ENCODE measurements at regions of chrX and their contacts with region 1.

Region 1: GRCh38 chrX:119791438-119792231 is at the start of gene RPL39:
- DNase-seq: peak in 1 of 2 experiments; percentile 71
- H3K4me3 ChIP-seq: peak within 1 kb of the TSS; percentile 72 to 98 (median 85)
- H3K27ac ChIP-seq: peak within 1 kb of the TSS; percentile 87
- H3K4me1 ChIP-seq: peaks cover 0 to 3% (median 0%) of the 10 kb centered on the region in 4 experiments; a peak in 1 of 7 replicates
- H3K27me3 ChIP-seq: no peaks in the 10 kb centered on the region
- CTCF ChIP-seq: no peak
- EP300 ChIP-seq: no peak
- POLR2A ChIP-seq: peak; percentile 90 to 94
- RAD21 ChIP-seq: no peak
- total RNA-seq, gene RPL39: 1,901 and 1,942 TPM in 2 replicates

Region 2: DNA sequence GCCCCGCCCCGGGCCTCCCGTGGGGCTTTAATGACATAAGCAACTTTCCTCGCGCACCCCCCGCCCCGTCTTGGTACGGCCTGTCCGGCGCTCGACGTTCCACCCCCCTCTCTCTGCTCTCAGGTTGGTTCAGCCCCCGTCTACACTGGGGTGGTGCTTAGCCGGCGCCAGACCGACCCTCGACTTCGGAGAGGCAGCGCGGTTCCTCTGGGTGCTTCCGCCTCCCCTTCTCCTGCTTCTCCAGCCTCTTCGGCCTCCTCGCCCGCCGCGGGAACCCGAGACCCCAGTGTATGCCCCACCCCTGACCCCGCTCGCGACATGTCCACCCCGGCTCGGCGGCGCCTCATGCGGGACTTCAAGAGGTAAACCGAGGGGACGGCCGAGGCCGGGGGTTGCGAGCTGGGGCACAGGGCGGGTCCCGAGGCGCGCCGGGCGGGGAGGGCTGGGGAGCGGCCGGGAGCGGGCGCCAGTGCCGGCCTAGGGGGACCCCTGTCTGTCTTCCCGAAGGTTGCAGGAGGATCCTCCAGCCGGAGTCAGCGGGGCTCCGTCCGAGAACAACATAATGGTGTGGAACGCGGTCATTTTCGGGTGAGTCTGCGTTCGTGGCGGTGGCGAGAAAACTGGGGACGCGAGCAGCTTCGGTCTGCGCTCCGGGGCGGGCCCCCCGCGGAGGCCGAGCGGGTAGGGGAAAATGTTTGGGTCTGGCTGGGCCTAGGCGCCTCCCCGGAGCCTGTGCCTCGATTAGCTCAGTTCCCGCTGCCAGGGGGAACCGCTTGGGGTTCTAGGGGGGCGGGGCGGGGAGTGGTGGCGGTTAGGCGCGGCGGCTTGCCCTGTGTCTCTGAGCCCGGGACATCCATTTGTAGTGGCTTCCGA is 217.0 kb before region 1 on chrX and contains the start of gene UBE2A:
- CTCF ChIA-PET with region 1: no interaction called
- POLR2A ChIA-PET with region 1: interaction called, 17 read pairs
- DNase-seq: peak; percentile 78 to 89
- H3K4me3 ChIP-seq: peak within 1 kb of the TSS; percentile 55 to 87 (median 64)
- H3K27ac ChIP-seq: peak within 1 kb of the TSS; percentile 58; the same call in 1 of the 2 replicates
- H3K4me1 ChIP-seq: peaks cover 0 to 4% (median 0%) of the 10 kb centered on the region in 4 experiments; a peak in 1 of 7 replicates
- H3K27me3 ChIP-seq: no peaks in the 10 kb centered on the region
- CTCF ChIP-seq: peak in 2 of 3 experiments; percentile 26 to 29; a peak in 3 of 4 replicates
- EP300 ChIP-seq: peak in 1 of 2 experiments; percentile 98; a peak in 2 of 3 replicates
- POLR2A ChIP-seq: peak; percentile 88 to 92
- RAD21 ChIP-seq: peak; percentile 4 to 21; a peak in 2 of 4 replicates
- total RNA-seq, gene UBE2A: 43.8 and 43.9 TPM in 2 replicates

Region 3: GRCh38 chrX:119753571-119754257 is 37.9 kb before region 1 on chrX:
- CTCF ChIA-PET with region 1: interaction called, 8 read pairs
- POLR2A ChIA-PET with region 1: interaction called, 48 read pairs
- DNase-seq: no peak
- H3K4me3 ChIP-seq: no peak overlapping the region
- H3K27ac ChIP-seq: no peak overlapping the region
- H3K4me1 ChIP-seq: peaks cover 4 to 16% (median 12%) of the 10 kb centered on the region in 4 experiments; a peak in 5 of 7 replicates
- H3K27me3 ChIP-seq: no peaks in the 10 kb centered on the region
- CTCF ChIP-seq: peak in 2 of 3 experiments; percentile 54 to 55; a peak in 3 of 4 replicates
- EP300 ChIP-seq: no peak
- POLR2A ChIP-seq: no peak
- RAD21 ChIP-seq: peak; percentile 39 to 60

Region 4: DNA sequence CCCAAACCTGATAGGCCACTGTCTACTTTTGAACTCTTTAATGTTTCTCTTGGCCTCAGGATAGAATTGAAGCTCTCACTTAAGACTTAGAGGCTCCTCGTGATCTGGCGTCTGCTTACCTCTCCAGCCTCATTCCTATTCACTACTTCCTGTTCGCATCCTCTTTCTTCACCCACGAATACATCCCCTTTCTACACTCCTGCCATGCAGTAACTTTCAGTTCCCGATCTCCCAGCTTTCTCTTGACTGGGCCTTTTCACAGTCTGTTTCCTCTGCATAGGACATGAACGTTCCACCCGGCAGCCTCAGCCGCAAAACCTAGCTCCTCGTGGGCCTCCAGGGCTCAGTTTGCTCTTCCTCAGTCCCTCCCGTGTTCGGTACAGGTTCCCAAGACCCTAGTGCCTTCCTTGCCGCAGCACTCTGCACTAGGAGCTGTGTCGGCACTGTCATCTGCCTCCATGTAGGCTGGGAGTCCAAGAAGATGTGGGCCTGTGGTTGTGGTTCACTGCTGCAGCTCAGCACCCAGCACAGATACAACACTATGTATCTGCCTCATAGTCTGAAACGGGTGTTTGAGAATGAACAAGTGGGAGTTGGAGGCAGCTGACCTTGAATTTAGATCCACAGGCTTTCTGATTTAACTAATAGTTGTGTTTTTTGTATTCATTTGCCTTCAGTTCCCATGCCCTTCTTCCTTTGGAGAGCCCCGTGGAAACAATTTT is 16.0 kb before region 1 on chrX:
- CTCF ChIA-PET with region 1: no interaction called
- POLR2A ChIA-PET with region 1: interaction called, 31 read pairs
- DNase-seq: no peak
- H3K4me3 ChIP-seq: no peak overlapping the region
- H3K27ac ChIP-seq: no peak overlapping the region
- H3K4me1 ChIP-seq: peaks cover 0 to 2% (median 0%) of the 10 kb centered on the region in 4 experiments; a peak in 1 of 7 replicates
- H3K27me3 ChIP-seq: no peaks in the 10 kb centered on the region
- CTCF ChIP-seq: no peak
- EP300 ChIP-seq: no peak
- POLR2A ChIP-seq: no peak
- RAD21 ChIP-seq: no peak

Region 5: GRCh38 chrX:119817130-119817690 is 25.6 kb after region 1 on chrX:
- CTCF ChIA-PET with region 1: no interaction called
- POLR2A ChIA-PET with region 1: interaction called, 20 read pairs
- DNase-seq: no peak
- H3K4me3 ChIP-seq: no peak overlapping the region
- H3K27ac ChIP-seq: no peak overlapping the region
- H3K4me1 ChIP-seq: no peaks in the 10 kb centered on the region
- H3K27me3 ChIP-seq: no peaks in the 10 kb centered on the region
- CTCF ChIP-seq: no peak
- EP300 ChIP-seq: no peak
- POLR2A ChIP-seq: no peak
- RAD21 ChIP-seq: no peak

Region 6: GRCh38 chrX:119871599-119872395 is 80.2 kb after region 1 on chrX and contains the starts of genes NDUFA1 and RNF113A:
- CTCF ChIA-PET with region 1: no interaction called
- POLR2A ChIA-PET with region 1: interaction called, 13 read pairs
- DNase-seq: peak; percentile 60 to 74
- H3K4me3 ChIP-seq: peak within 1 kb of the TSS; percentile 81 to 95 (median 90)
- H3K27ac ChIP-seq: peak within 1 kb of the TSS; percentile 84
- H3K4me1 ChIP-seq: no peaks in the 10 kb centered on the region
- H3K27me3 ChIP-seq: no peaks in the 10 kb centered on the region
- CTCF ChIP-seq: no peak
- EP300 ChIP-seq: no peak
- POLR2A ChIP-seq: peak; percentile 34 to 64
- RAD21 ChIP-seq: no peak
- total RNA-seq, gene NDUFA1: 69.7 and 74.1 TPM in 2 replicates
- total RNA-seq, gene RNF113A: 14.2 and 14.3 TPM in 2 replicates

Region 7: GRCh38 chrX:119970574-119970973 is 178.9 kb after region 1 on chrX:
- CTCF ChIA-PET with region 1: no interaction called
- POLR2A ChIA-PET with region 1: no interaction called
- DNase-seq: no peak
- H3K4me3 ChIP-seq: no peak overlapping the region
- H3K27ac ChIP-seq: no peak overlapping the region
- H3K4me1 ChIP-seq: 0 out of 7 replicates have a peak, but pooled peaks cover 0 to 2% (median 0%) of the 10 kb centered on the region in 4 experiments
- H3K27me3 ChIP-seq: no peaks in the 10 kb centered on the region
- CTCF ChIP-seq: no peak
- EP300 ChIP-seq: no peak
- POLR2A ChIP-seq: no peak
- RAD21 ChIP-seq: no peak